AG04449 (cell line): ENCODE measurements at regions of chr13 and their contacts with region 1.

Region 1: GRCh38 chr13:114130837-114131582 is 1.4 kb downstream of the RASA3 start:
- DNase-seq: no peak
- H3K4me3 ChIP-seq: peak overlapping the region; percentile 89
- CTCF ChIP-seq: no peak

Region 2: GRCh38 chr13:114065141-114065925 is 65.7 kb before region 1 on chr13:
- CTCF ChIA-PET with region 1: no interaction called
- POLR2A ChIA-PET with region 1: interaction called, 16 read pairs
- DNase-seq: peak; percentile 89
- H3K4me3 ChIP-seq: peak overlapping the region; percentile 46
- CTCF ChIP-seq: peak; percentile 15

Region 3: GRCh38 chr13:114099191-114099590 is 31.8 kb before region 1 on chr13:
- CTCF ChIA-PET with region 1: no interaction called
- POLR2A ChIA-PET with region 1: no interaction called
- DNase-seq: peak; percentile 82
- H3K4me3 ChIP-seq: no peak overlapping the region
- CTCF ChIP-seq: no peak

Region 4: GRCh38 chr13:114143806-114144605 is 13.0 kb after region 1 on chr13:
- CTCF ChIA-PET with region 1: no interaction called
- POLR2A ChIA-PET with region 1: no interaction called
- DNase-seq: no peak
- H3K4me3 ChIP-seq: no peak overlapping the region
- CTCF ChIP-seq: peak; percentile 12

Region 5: GRCh38 chr13:114185182-114185971 is 54.4 kb after region 1 on chr13:
- CTCF ChIA-PET with region 1: no interaction called
- POLR2A ChIA-PET with region 1: no interaction called
- DNase-seq: no peak
- H3K4me3 ChIP-seq: no peak overlapping the region
- CTCF ChIP-seq: no peak